Right ventricle myocardium superior (tissue), 1 donor: ENCODE measurements at regions of chr2 and their contacts with region 1.

Region 1: GRCh38 chr2:121717529-121717928 is 19.1 kb downstream of the NIFK start:
- DNase-seq: no peak
- ATAC-seq: no peak

Region 2: DNA sequence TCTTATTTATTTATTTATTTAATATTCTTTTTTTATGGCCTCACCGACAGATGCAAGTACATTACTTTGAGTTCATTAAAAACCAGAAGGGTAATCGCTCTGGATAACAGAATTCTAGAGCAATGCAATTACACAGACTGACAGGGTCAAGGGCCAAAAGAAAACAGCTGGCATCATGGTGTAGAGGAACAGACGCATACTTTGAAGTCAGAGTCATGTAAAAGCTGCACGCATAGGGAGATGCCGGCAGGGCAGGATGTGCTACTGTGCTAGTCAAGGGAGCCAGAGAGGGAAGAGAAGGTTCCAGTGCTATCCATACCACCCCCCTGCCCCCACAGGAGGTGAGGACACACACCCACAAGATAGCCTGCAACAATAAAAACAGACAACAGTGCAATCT is 317.3 kb before region 1 on chr2:
- intact Hi-C with region 1: loop called (anchors 5 kb)
- DNase-seq: no peak
- ATAC-seq: no peak

Region 3: DNA sequence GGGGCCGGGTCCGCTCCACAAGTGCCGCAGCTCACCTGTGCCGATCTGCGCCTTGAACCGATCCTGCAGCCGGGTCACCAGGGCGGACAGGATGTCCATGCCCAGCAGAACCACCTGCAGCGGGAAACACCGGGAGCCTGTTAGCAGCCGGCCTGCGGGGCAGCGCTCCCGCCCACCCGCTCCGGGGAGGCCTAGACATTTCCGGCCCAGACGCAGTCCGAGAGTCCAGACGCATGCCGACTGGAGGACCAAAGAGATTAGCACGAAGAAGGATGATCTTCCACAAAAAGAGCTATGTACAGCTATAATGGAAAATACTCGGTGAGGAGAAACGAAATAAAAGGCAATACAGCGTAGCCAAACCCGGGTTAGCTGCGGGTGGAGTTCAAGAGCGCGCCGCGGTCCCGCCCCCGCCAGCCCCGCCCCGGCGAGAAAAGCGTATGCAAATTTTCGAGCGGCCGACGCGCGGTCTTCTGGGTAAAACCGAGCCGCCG is 187.3 kb before region 1 on chr2:
- intact Hi-C with region 1: loop called (anchors 5 kb)
- DNase-seq: peak; percentile 90
- ATAC-seq: peak; percentile 90

Region 4: DNA sequence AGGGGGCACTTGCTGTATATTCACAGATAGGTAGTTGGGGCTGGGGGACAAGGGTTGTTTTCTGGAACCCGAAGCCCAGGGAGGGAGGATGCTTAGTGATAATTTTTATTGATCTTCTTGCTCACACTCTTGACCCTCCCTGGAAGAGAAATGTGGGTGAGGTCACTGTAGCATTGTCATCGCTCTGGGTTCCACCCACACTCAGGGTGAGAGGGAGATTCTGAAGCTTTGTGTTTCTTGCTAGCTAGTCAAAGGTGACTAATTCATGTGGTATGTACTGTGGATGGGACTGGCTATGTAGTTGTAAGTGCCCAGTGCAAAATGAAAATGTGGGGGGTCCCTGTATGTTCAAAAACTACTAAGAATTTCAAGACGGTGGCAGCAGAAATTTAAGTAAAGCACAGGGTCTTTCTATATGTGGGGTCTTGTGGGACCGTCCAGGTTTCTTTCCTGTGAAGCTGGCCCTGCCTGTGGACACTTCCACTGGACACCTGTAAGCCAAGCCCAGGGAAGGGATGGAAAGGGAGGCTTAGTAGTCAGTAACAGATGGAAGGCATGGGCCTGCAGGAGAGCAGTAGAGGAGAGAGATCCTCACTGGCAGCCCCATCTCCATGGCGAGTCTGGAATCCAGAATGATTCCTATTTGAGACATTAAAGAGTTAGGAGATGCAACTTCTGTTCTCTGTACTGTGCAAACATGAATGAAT is 72.9 kb after region 1 on chr2:
- intact Hi-C with region 1: no loop called
- DNase-seq: no peak
- ATAC-seq: no peak